ENCODE measurements at regions of chr20 and their contacts with region 1.

Region 1: DNA sequence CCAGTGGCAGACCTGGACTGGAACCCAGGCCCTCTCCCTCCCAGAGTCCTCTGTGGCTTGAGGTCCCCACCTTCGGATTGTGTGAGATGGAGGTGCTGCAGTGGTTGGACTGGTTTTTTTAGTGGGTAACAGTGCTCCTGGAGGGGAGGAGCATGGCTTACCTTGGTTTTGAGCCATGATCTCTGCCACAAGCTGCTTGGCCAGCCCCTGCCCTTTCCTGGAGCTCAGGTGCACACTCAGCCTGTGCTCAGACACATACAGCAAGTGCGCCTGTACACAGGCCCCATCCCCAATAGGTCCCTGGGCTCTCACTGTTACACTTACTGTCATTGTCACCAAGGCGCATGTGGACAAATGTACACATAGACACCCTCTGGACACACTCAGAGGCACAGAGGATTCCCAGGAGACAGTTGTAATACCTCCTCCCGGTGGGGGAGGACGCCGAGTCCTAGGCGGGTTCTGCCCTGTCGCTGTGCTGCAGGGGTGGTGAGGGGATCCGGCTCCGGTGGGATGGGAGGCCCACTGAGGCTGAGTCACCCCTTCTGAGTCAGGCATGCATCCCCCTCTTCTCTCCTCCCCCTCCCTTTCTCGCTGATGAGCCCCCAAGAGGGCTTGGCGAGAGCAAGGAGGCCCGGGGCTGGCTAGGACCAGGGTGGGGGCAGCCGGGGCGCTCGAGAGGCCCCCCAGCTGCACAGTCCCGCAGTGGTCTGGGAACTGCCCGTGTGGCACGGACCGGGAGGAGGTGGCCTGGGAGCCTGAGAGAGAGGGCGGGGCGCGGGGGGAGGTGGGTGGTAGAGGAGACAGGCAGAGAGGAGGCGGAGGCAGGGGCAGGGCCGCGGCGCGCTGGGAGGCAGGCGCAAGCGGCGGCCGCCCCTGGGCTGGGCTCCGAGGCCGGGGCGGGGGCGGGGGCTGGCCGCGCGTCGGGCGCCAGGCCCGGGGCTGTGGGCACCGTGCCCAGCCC is 522 bp upstream of the EPB41L1 start:
- DNase-seq: no peak
- H3K4me3 ChIP-seq: peak overlapping the region; percentile 78
- CTCF ChIP-seq: no peak

Region 2: DNA sequence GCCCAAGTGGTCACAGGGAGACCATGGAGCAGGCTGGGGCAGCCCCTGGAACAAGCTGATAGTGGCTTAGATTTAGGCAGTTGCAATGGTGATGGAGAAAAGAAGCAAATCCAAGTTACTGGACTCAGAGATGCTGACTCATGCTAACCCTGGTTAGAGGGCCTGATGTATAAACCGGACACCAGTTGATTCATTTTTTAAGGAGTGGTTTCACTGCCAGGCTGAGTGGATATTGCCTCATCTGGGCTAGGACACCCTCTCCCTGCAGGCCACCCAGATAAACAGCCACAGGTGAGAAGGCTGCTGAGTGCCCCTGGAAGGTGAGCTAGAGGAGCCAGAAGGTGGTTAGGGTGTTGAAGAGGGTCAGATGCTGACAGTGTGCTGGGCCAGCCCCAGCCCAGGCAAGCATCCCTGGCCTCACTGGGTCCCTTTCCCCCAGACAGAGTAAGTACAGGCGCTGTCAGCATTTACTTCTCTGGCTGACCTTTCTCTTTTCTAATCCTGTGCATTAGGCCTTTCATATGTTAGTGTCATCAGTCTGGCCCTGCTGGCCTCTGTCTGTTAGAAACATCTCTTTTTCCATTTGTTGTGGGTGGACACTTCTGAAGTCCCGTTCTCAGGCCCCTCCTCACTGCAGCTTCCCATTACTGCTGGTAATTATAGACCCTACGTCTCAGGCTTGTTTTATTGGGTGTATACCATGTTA is 14.0 kb after region 1 on chr20:
- CTCF ChIA-PET with region 1: interaction called, 85 read pairs
- POLR2A ChIA-PET with region 1: no interaction called
- DNase-seq: no peak
- H3K4me3 ChIP-seq: no peak overlapping the region
- CTCF ChIP-seq: no peak

Region 3: GRCh38 chr20:36173451-36173933 is 19.5 kb after region 1 on chr20:
- CTCF ChIA-PET with region 1: interaction called, 85 read pairs
- POLR2A ChIA-PET with region 1: no interaction called
- DNase-seq: no peak
- H3K4me3 ChIP-seq: no peak overlapping the region
- CTCF ChIP-seq: no peak

Region 4: DNA sequence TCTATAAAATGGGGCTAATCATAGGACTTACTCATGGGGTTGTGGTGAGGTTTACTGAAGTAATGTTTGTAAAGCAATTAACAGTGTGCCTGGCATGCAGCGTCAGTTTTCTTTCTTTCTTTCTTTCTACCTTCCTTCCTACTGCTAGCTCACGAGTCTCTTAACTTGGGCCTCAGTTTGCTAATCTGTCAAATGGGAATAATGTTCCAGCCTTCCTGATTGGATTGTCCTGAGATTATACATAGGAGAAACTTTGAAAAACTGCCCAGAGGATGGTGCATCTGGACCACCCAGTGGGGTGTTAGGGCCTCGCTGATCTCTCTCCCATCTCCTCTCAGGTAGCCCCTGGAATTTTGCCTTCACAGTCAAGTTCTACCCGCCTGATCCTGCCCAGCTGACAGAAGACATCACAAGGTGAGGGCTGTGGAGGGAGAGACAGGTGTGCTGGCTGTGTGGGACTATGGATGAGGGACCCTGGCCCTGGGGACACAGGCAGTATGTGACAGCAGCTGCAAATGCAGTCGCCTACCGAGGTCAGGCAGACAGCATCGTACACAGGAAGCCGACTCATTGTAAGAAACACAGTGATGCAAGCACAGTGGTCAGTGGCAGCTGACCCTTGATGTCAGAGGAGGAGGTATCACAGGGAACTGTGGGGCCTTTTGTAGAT is 28.1 kb after region 1 on chr20:
- CTCF ChIA-PET with region 1: interaction called, 30 read pairs
- POLR2A ChIA-PET with region 1: no interaction called
- DNase-seq: no peak
- H3K4me3 ChIP-seq: no peak overlapping the region
- CTCF ChIP-seq: no peak

Measured in AG04449 (cell line).